Activated CD8-positive, alpha-beta T cell treated with anti-CD3 and anti-CD28 coated beads, Interleukin-2, amount 10 ng/mL, durations not matched to agents 7 days and 5 days (primary cell): ENCODE measurements at regions of chr5 and their contacts with region 1.

Region 1: GRCh38 chr5:923281-923873 is 30.7 kb downstream of the TRIP13 start:
- DNase-seq: peak; percentile 84
- ATAC-seq: peak; percentile 97
- H3K4me3 Mint-ChIP-seq: no peak overlapping the region
- H3K27ac Mint-ChIP-seq: no peak overlapping the region
- H3K4me1 Mint-ChIP-seq: peaks cover 14% of the 10 kb centered on the region
- H3K27me3 Mint-ChIP-seq: peaks cover 23% of the 10 kb centered on the region

Region 2: DNA sequence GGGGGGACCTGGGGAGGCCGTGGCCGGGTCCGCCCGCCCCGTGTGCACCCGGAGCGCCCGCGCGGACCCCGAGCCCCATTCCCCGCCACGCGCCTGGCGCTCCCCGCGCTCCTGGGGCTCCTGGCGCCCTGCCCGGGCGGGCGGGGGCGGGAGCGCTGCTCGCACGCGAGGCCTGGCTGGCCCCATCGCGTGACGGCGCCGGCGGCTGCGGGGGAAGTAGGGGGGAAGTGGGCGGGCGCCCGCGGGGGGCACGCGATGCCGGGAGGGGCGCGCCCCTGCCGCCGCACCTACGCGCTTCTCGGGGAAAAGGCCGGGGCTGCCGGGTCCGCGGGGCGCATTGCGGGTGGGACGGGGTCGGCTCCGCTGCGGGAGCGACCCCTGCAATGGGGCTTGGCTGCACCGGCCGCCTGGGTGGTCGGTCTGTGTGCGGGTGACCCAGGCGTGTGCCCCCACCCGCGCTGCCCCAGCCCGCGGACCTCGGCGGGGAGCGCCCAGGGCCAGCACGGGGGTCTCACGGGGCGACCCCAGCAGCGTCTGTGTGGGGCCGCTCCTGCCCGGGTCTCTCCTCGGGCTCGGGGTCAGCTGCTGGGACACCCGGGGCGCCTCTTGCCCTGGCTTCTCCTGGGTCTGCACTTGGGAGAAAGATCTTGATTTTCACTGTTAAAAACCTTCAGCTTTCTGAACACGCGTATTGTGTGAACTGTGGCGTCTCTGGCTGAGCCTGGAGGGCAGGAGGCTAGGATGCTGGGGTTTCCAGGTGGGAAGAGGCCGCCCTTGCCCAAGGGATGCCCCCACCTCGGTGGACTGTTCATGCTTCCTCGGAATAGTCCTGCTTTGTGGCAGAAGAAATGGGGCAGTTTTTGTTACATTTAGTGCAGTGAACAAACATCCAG is 549.4 kb before region 1 on chr5:
- CTCF ChIA-PET with region 1: no interaction called
- POLR2A ChIA-PET with region 1: no interaction called
- DNase-seq: peak; percentile 87
- ATAC-seq: peak; percentile 54
- H3K4me3 Mint-ChIP-seq: peak overlapping the region; percentile 70
- H3K27ac Mint-ChIP-seq: peak overlapping the region; percentile 97
- H3K4me1 Mint-ChIP-seq: peaks cover 87% of the 10 kb centered on the region
- H3K27me3 Mint-ChIP-seq: no peaks in the 10 kb centered on the region

Region 3: DNA sequence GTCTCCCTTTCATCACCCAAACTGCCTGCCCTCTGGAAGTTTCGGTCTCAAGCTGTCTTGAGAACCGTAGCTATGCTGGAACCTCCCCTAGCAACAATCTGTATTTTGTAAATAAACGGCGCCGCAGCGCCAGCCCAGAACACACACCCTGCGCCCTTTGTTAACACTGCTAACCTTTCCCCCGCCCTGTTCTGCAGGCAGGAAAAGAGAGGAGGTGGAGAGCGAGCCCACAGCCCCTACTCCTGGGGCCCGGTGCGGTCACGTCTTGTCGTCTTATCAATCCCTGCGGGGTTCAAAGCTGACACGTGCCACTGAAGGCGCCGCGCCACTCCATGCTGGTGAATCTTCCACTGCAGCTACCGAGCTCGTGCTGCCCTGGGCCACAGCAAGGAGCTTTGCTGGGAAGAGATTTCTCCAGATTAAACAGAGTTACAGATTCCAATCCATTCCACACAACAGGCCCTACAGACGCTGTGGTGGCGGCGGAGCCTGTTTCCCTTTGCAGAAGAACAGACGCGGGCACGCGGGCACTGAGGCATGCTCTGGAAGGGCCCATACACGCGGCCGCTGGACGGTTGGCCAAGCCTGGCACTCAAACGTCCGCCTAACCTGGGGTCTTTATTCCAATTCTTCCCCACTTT is 164.1 kb before region 1 on chr5:
- CTCF ChIA-PET with region 1: no interaction called
- POLR2A ChIA-PET with region 1: no interaction called
- DNase-seq: peak; percentile 37
- ATAC-seq: peak; percentile 76
- H3K4me3 Mint-ChIP-seq: no peak overlapping the region
- H3K27ac Mint-ChIP-seq: no peak overlapping the region
- H3K4me1 Mint-ChIP-seq: peaks cover 5% of the 10 kb centered on the region
- H3K27me3 Mint-ChIP-seq: no peaks in the 10 kb centered on the region

Region 4: DNA sequence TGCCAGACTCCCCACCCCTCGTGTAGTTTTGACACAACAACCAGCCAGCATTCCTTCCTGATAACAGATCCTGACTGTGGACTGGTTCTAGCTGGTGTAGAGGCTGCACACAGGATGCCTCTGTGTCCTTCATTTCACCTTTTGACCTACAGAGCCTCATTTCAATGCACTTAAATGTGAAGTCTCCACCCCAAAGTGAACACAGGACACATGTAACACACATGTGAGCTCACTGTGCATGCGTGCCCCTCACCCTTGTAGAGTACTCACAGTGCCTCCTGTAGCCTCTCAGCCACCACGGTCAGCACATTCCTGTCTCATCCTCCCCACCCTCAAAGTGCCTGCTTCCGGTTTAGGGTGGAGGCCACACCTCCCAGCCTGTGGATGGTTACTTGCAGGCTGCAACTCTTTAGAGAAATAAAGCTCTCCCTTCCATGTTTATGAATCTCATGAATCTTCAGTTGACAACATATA is 73.7 kb after region 1 on chr5:
- CTCF ChIA-PET with region 1: interaction called, 11 read pairs
- POLR2A ChIA-PET with region 1: no interaction called
- DNase-seq: peak; percentile 71
- ATAC-seq: peak; percentile 90
- H3K4me3 Mint-ChIP-seq: peak overlapping the region; percentile 71
- H3K27ac Mint-ChIP-seq: peak overlapping the region; percentile 83
- H3K4me1 Mint-ChIP-seq: peaks cover 31% of the 10 kb centered on the region
- H3K27me3 Mint-ChIP-seq: peaks cover 7% of the 10 kb centered on the region

Region 5: DNA sequence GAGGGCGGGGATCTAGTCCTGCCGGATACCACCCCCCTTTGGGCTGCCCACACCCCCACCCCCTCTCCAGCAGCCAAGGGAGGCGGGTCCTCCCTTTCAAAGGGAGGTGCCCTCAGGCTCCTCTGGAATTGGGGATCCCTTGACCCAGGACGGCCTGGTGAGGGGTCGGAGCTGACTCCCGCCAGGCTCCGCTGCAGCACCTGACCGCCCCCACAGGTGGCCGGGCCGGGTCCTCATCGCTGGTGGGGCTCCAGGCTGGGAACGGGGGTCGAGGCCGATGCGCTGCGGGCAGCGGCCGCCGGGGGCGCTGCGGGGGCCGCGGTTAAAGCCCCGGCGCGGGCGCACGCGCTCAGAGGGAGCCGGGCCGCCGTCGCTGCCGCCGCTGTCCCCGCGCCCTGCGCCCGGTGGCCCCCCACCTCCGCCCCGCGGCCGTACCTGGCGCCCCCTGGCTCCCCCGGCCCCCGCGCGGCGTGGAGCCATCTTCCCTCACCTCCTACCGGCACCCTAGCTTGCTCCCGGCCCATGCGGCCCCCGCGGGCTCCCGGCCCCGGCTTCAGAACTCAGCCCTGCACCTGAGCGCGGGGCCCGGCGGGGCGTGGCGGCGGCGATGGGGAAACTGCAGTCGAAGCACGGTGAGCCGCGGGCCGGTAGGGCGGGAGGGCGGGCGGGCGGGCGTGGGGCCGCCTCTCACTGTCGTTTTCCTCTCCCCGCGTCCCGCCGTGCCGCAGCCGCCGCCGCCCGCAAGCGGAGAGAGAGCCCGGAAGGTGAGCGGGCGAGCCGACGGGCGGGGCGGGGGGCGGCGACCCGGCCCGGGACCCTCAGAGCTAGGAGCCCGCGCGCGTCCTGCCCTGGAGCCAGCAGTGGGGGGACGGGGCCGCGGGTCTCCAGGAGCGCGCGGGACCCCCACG is 85.3 kb after region 1 on chr5 and contains the start of gene NKD2:
- CTCF ChIA-PET with region 1: interaction called, 65 read pairs
- POLR2A ChIA-PET with region 1: no interaction called
- DNase-seq: peak; percentile 47
- ATAC-seq: peak; percentile 64
- H3K4me3 Mint-ChIP-seq: peak within 1 kb of the TSS; percentile 17
- H3K27ac Mint-ChIP-seq: no peak within 1 kb of the TSS
- H3K4me1 Mint-ChIP-seq: peaks cover 24% of the 10 kb centered on the region
- H3K27me3 Mint-ChIP-seq: peaks cover 42% of the 10 kb centered on the region
- total RNA-seq, gene NKD2: 1.3 to 3.2 TPM

Region 6: DNA sequence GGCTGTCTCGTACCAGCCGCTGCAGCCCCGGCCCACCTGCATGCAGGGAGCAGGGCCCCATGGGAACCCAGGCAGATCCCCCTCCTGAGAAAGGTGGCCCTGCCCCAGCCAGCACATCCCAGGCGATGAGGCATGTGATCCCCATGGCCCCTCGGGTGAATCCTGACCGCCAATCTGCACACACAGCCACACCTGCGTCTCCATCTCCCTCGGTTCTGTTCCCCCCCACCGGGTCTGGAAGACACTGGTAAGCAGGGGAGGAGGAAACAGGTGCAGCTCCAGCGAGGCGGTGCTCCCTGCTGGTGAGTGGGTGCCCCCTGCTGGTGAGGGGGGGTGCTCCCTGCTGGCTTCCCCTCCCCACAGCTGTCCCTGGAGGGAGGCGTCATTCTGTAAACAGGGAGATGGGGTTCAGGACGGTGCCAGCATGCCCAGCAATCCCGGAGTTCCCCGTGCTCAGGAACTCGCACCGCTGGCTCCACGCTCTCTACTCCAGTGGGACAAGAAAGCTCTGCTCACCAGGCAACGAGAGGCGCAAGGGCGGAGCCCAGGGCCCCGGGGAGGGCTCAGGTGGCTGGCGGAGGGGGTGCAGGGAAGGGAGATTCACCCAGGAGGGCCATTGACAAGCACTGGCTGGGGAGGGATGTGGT is 216.9 kb after region 1 on chr5:
- CTCF ChIA-PET with region 1: interaction called, 54 read pairs
- POLR2A ChIA-PET with region 1: no interaction called
- DNase-seq: peak; percentile 89
- ATAC-seq: peak; percentile 92
- H3K4me3 Mint-ChIP-seq: no peak overlapping the region
- H3K27ac Mint-ChIP-seq: no peak overlapping the region
- H3K4me1 Mint-ChIP-seq: peaks cover 12% of the 10 kb centered on the region
- H3K27me3 Mint-ChIP-seq: peaks cover 3% of the 10 kb centered on the region

Region 7: GRCh38 chr5:1167728-1168709 is 244.6 kb after region 1 on chr5:
- CTCF ChIA-PET with region 1: interaction called, 21 read pairs
- POLR2A ChIA-PET with region 1: no interaction called
- DNase-seq: peak; percentile 81
- ATAC-seq: peak; percentile 76
- H3K4me3 Mint-ChIP-seq: peak overlapping the region; percentile 47
- H3K27ac Mint-ChIP-seq: no peak overlapping the region
- H3K4me1 Mint-ChIP-seq: peaks cover 14% of the 10 kb centered on the region
- H3K27me3 Mint-ChIP-seq: peaks cover 11% of the 10 kb centered on the region

Region 8: DNA sequence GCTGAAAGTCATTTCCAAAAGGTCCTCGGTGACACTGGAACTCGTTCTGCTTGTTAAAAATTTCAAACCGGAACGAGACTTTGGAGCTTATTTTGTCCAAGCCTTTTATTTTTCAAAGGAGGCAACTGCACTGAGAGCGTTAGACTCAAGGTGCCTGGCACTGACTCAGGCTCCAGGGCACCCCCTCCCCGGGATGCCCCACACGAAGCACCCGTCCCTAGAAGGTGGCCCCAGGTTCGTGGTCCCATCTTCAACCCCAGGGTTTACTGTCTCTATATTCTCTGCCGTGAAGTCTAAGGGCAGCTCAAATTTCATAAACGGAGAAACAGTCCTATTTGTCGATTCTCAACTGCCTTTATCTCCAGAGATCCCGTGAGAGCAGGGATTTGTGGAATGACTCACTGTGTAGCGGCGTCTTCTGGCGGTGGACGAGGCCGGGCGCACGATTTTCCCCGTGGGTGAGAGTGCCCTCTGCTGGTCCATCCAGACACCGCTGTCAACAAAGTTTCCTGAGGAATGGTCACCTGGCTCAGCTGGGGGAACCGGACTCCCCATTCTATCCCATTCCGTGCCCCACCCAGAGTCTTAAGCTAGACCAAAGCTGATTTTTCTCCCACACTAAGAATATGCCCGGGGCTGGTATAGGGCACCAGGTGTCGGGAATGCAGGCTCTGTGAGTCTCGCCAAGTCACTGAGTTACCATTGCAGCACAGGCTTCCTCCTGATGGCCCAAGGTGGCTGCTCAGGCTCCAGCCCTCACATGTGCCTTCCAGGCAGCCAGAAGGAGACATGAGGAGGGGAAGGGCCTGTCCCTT is 251.0 kb after region 1 on chr5:
- CTCF ChIA-PET with region 1: interaction called, 21 read pairs
- POLR2A ChIA-PET with region 1: no interaction called
- DNase-seq: peak; percentile 56
- ATAC-seq: peak; percentile 50
- H3K4me3 Mint-ChIP-seq: no peak overlapping the region
- H3K27ac Mint-ChIP-seq: no peak overlapping the region
- H3K4me1 Mint-ChIP-seq: peaks cover 7% of the 10 kb centered on the region
- H3K27me3 Mint-ChIP-seq: peaks cover 4% of the 10 kb centered on the region

Region 9: GRCh38 chr5:1315709-1316587 is 392.6 kb after region 1 on chr5:
- CTCF ChIA-PET with region 1: no interaction called
- POLR2A ChIA-PET with region 1: no interaction called
- DNase-seq: peak; percentile 79
- ATAC-seq: peak; percentile 62
- H3K4me3 Mint-ChIP-seq: peak overlapping the region; percentile 69
- H3K27ac Mint-ChIP-seq: peak overlapping the region; percentile 91
- H3K4me1 Mint-ChIP-seq: peaks cover 61% of the 10 kb centered on the region
- H3K27me3 Mint-ChIP-seq: peaks cover 9% of the 10 kb centered on the region